CD8-positive, alpha-beta T cell (primary cell): ENCODE measurements at regions of chr1 and their contacts with region 1.

Region 1: DNA sequence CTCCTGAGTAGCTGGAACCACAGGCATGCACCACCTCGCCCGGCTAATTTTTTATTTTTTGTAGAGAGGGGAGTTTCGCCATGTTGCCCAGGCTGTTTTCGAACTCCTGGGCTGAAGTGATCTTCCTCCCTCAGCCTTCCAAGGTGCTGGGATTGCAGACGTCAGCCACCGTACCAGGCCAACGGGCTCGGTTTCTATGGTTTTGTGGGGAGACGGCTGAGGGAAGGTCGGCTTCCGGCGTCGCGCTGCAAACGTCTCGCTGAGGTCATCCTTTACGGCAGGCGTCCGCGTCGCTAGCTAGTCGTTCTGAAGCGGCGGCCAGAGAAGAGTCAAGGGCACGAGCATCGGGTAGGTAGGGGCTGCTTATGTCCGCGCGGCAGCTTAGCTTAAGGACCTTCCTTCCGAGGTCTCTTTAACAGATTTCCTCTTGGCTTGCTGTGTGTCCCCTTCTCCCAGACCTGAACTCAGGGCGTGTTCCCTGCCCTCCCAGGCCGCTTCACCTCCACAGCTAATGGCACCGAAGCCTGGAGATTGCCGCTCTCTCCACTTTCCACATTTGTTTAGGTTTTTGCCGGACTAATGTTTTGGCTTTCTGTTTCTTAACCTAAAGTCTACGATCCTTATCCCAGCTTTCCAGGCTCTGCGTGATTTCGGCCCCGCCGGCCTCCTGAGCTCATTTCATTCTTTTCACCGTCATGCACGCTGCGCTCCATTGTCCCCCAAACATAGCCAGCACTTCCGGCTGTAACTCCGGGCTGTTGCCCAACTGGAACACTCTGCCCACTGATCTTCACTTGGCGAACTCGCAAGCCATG is at the start of gene NDUFS5:
- DNase-seq: peak; percentile 62 to 93 (median 83)
- ATAC-seq: peak; percentile 94
- H3K4me3 ChIP-seq: peak within 1 kb of the TSS; percentile 70 to 86
- H3K4me3 Mint-ChIP-seq: peak within 1 kb of the TSS; percentile 95
- H3K27ac ChIP-seq: peak within 1 kb of the TSS; percentile 74 to 88
- H3K27ac Mint-ChIP-seq: peak within 1 kb of the TSS; percentile 97
- H3K4me1 ChIP-seq: peaks cover 17% of the 10 kb centered on the region
- H3K4me1 Mint-ChIP-seq: peaks cover 31% of the 10 kb centered on the region
- H3K27me3 ChIP-seq: no peaks in the 10 kb centered on the region
- H3K27me3 Mint-ChIP-seq: no peaks in the 10 kb centered on the region
- CTCF ChIP-seq: no peak
- total RNA-seq, gene NDUFS5: 93.1 to 105 TPM

Region 2: GRCh38 chr1:38873027-38873969 is 153.0 kb before region 1 on chr1 and contains the start of gene MYCBP:
- CTCF ChIA-PET with region 1: no interaction called
- POLR2A ChIA-PET with region 1: interaction called, 9 read pairs
- intact Hi-C with region 1: loop called (anchors 2 kb)
- DNase-seq: peak; percentile 94 to 98 (median 97)
- ATAC-seq: peak; percentile 98
- H3K4me3 ChIP-seq: peak within 1 kb of the TSS; percentile 56 to 92
- H3K4me3 Mint-ChIP-seq: peak within 1 kb of the TSS; percentile 93
- H3K27ac ChIP-seq: peak within 1 kb of the TSS; percentile 67 to 71
- H3K27ac Mint-ChIP-seq: peak within 1 kb of the TSS; percentile 84
- H3K4me1 ChIP-seq: peaks cover 16% of the 10 kb centered on the region
- H3K4me1 Mint-ChIP-seq: peaks cover 31% of the 10 kb centered on the region
- H3K27me3 ChIP-seq: no peaks in the 10 kb centered on the region
- H3K27me3 Mint-ChIP-seq: no peaks in the 10 kb centered on the region
- CTCF ChIP-seq: no peak
- total RNA-seq, gene MYCBP: 2.0 to 3.2 TPM

Region 3: GRCh38 chr1:38973659-38974424 is 52.4 kb before region 1 on chr1:
- CTCF ChIA-PET with region 1: no interaction called
- POLR2A ChIA-PET with region 1: interaction called, 7 read pairs
- intact Hi-C with region 1: loop called in 1 of 2 experiments (anchors 5 kb)
- DNase-seq: no peak
- ATAC-seq: no peak
- H3K4me3 ChIP-seq: no peak overlapping the region
- H3K4me3 Mint-ChIP-seq: no peak overlapping the region
- H3K27ac ChIP-seq: no peak overlapping the region
- H3K27ac Mint-ChIP-seq: no peak overlapping the region
- H3K4me1 ChIP-seq: peaks cover 9% of the 10 kb centered on the region
- H3K4me1 Mint-ChIP-seq: peaks cover 13% of the 10 kb centered on the region
- H3K27me3 ChIP-seq: no peaks in the 10 kb centered on the region
- H3K27me3 Mint-ChIP-seq: no peaks in the 10 kb centered on the region
- CTCF ChIP-seq: no peak